Panc1 (cell line): ENCODE measurements at regions of chr3 and their contacts with region 1.

Region 1: DNA sequence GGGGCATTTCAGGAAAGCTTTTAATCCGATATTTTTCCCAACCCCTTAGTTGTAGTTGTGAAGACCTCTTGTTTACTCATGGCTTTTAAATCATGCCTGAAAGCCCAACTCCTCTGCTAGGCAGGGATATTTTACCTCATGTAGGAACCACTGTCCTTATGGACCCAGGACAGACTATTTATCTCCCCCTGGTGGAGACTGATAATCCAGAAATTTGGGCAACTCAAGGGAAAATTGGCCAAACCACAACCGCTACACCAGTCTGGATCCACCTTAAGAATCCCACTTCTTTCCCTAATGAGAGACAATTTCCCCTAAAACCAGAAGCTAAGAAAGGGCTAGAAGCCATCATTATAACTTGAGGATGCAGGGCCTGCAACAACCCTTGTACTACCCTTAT is 248.1 kb upstream of the STAC start:
- DNase-seq: no peak
- ATAC-seq: no peak
- H3K4me3 ChIP-seq: no peak overlapping the region
- H3K27ac ChIP-seq: no peak overlapping the region
- H3K4me1 ChIP-seq: no peaks in the 10 kb centered on the region
- H3K27me3 ChIP-seq: no peaks in the 10 kb centered on the region
- CTCF ChIP-seq: no peak

Region 2: DNA sequence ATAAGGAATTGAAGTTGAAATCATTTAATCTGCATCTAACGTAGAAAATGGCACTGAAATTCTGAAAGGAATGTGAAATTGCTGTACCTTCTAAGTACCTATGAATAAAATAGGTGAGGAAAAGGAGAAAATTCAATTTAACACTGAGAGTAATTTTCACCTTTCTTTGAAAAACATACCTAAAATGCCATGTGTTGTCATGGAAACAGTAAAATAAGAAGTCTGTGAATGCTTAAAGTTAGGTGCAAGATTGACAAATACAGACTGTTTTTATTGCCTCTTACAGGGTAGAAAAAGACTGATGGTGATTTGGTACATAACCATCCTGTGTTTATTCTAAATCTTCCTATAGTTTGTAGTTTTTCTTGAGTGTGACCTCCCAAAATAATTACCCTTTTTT is 30.1 kb before region 1 on chr3:
- CTCF ChIA-PET with region 1: no interaction called
- POLR2A ChIA-PET with region 1: no interaction called
- in situ Hi-C with region 1: no loop called
- intact Hi-C with region 1: no loop called
- DNase-seq: no peak
- ATAC-seq: no peak
- H3K4me3 ChIP-seq: no peak overlapping the region
- H3K27ac ChIP-seq: no peak overlapping the region
- H3K4me1 ChIP-seq: no peaks in the 10 kb centered on the region
- H3K27me3 ChIP-seq: no peaks in the 10 kb centered on the region
- CTCF ChIP-seq: no peak

Region 3: DNA sequence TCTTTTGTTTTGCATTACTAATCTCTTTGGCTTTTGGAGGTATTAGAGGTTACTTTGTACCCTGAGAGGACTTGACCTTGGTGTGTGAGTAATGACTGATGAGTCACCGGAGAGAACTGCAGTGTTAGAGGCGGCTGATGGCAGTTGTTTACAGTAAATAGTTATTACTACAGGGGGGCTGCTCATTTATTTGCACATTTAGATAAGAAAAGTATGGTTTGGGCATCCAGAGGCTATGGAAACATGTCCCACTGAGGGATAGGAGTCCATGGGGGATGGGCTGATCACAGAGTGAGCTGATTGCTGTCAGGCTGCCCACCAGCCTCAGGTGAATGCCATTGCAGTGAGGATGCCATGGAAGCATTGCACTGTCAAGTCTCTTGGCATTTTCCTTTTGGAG is 230.8 kb after region 1 on chr3:
- CTCF ChIA-PET with region 1: no interaction called
- POLR2A ChIA-PET with region 1: no interaction called
- in situ Hi-C with region 1: no loop called
- intact Hi-C with region 1: loop called (anchors 10 kb)
- DNase-seq: peak; percentile 76
- ATAC-seq: peak; percentile 98
- H3K4me3 ChIP-seq: peak overlapping the region; percentile 5 to 24; a peak in 2 of 4 replicates
- H3K27ac ChIP-seq: peak overlapping the region; percentile 74
- H3K4me1 ChIP-seq: peaks cover 13% of the 10 kb centered on the region
- H3K27me3 ChIP-seq: no peaks in the 10 kb centered on the region
- CTCF ChIP-seq: no peak

Region 4: GRCh38 chr3:36993326-36994283 is 861.4 kb after region 1 on chr3 and contains the start of gene MLH1:
- CTCF ChIA-PET with region 1: no interaction called
- POLR2A ChIA-PET with region 1: interaction called, 14 read pairs
- in situ Hi-C with region 1: no loop called
- intact Hi-C with region 1: no loop called
- DNase-seq: peak; percentile 100
- ATAC-seq: peak; percentile 96
- H3K4me3 ChIP-seq: peak within 1 kb of the TSS; percentile 92 to 99
- H3K27ac ChIP-seq: peak within 1 kb of the TSS; percentile 97
- H3K4me1 ChIP-seq: peaks cover 21% of the 10 kb centered on the region
- H3K27me3 ChIP-seq: no peaks in the 10 kb centered on the region
- CTCF ChIP-seq: no peak
- total RNA-seq, gene MLH1: 28.5 TPM